ENCODE measurements at regions of chr17 and their contacts with region 1.

Region 1: GRCh38 chr17:57243171-57243948 is 13.0 kb upstream of the MSI2 start:
- DNase-seq: peak; percentile 38 to 73 (median 60)
- ATAC-seq: peak; percentile 58 to 85 (median 74)
- H3K4me3 ChIP-seq: no peak overlapping the region
- H3K27ac ChIP-seq: peak overlapping the region in 6 of 12 donors; percentile 16 to 67 (median 41)
- H3K4me1 ChIP-seq: peaks cover 0 to 17% (median 12%) of the 10 kb centered on the region in 12 donors
- H3K27me3 ChIP-seq: peaks cover 0 to 4% (median 0%) of the 10 kb centered on the region in 9 donors
- CTCF ChIP-seq: peak; percentile 95 to 99 (median 97)
- POLR2A ChIP-seq: no peak

Region 2: GRCh38 chr17:57130761-57131461 is 112.4 kb before region 1 on chr17:
- intact Hi-C with region 1: loop called in 1 of 10 experiments (anchors 10 kb)
- DNase-seq: peak; percentile 79 to 87 (median 83)
- ATAC-seq: peak; percentile 89 to 93 (median 92)
- H3K4me3 ChIP-seq: peak overlapping the region in 2 of 12 donors; percentile 26 to 32
- H3K27ac ChIP-seq: no peak overlapping the region
- H3K4me1 ChIP-seq: peaks cover 0 to 7% (median 0%) of the 10 kb centered on the region in 12 donors
- H3K27me3 ChIP-seq: no peaks in the 10 kb centered on the region
- CTCF ChIP-seq: peak; percentile 85 to 95 (median 90)
- POLR2A ChIP-seq: no peak

Region 3: GRCh38 chr17:57211543-57211942 is 31.8 kb before region 1 on chr17:
- intact Hi-C with region 1: no loop called
- DNase-seq: no peak
- ATAC-seq: no peak
- H3K4me3 ChIP-seq: no peak overlapping the region
- H3K27ac ChIP-seq: no peak overlapping the region
- H3K4me1 ChIP-seq: no peaks in the 10 kb centered on the region
- H3K27me3 ChIP-seq: no peaks in the 10 kb centered on the region
- CTCF ChIP-seq: no peak
- POLR2A ChIP-seq: no peak

Region 4: DNA sequence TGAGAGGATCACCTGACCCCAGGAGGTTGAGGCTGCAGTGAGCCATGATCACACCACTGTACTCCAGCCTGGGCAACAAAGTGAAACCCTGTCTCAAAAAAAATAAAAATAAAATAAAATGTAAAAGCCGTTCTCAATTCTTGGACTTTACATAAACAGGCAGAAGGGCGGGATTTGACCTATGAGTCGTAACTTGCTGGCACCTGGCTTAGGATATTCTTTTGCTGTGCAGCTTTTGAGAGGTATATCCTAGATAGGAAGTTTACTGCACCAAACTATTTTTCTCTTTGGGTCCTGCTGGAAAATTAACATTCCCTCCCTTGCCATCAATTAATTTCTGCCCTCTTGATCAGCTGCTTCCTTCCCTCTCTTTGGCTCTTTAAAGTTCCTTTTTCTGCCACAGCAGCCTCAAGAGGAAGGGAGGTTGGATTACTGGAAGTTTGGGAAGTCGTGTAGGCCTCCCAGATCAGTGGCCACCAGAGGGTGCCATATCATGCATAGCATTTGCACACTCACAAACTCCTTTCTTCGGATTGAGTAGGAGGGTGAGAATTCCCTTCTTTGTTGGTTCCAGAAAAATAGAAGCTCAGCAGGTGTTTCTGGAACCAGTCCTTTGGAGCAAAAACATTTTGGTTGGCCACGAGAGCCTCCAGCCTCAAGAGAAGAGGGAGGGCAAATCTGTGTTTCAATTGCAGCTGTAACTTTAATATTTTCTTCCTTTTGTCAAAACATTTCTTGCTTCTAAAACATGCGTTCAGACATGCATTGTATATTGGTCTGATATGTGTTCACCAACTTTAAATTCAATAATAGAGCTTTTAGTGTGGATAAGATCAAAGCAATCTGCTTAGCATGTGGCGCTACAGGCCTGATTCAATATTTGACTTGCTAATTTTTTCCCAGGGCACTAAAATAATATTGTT is 354.4 kb after region 1 on chr17:
- intact Hi-C with region 1: loop called in 3 of 10 experiments (anchors 5 to 10 kb)
- DNase-seq: peak in 4 of 5 donors; percentile 72 to 80 (median 76)
- ATAC-seq: peak in 3 of 4 donors; percentile 40 to 79 (median 76)
- H3K4me3 ChIP-seq: no peak overlapping the region
- H3K27ac ChIP-seq: peak overlapping the region in 5 of 12 donors; percentile 30 to 84 (median 49)
- H3K4me1 ChIP-seq: peaks cover 0 to 63% (median 24%) of the 10 kb centered on the region in 12 donors
- H3K27me3 ChIP-seq: no peaks in the 10 kb centered on the region
- CTCF ChIP-seq: peak; percentile 76 to 92 (median 85)
- POLR2A ChIP-seq: no peak

Region 5: GRCh38 chr17:57671667-57672632 is 428.6 kb after region 1 on chr17:
- intact Hi-C with region 1: loop called (anchors 2 to 10 kb)
- DNase-seq: peak; percentile 80 to 87 (median 82)
- ATAC-seq: peak; percentile 78 to 91 (median 88)
- H3K4me3 ChIP-seq: no peak overlapping the region
- H3K27ac ChIP-seq: peak overlapping the region in 2 of 12 donors; percentile 8 to 35
- H3K4me1 ChIP-seq: peaks cover 0 to 28% (median 10%) of the 10 kb centered on the region in 12 donors
- H3K27me3 ChIP-seq: no peaks in the 10 kb centered on the region
- CTCF ChIP-seq: peak; percentile 87 to 97 (median 96)
- POLR2A ChIP-seq: no peak

Region 6: DNA sequence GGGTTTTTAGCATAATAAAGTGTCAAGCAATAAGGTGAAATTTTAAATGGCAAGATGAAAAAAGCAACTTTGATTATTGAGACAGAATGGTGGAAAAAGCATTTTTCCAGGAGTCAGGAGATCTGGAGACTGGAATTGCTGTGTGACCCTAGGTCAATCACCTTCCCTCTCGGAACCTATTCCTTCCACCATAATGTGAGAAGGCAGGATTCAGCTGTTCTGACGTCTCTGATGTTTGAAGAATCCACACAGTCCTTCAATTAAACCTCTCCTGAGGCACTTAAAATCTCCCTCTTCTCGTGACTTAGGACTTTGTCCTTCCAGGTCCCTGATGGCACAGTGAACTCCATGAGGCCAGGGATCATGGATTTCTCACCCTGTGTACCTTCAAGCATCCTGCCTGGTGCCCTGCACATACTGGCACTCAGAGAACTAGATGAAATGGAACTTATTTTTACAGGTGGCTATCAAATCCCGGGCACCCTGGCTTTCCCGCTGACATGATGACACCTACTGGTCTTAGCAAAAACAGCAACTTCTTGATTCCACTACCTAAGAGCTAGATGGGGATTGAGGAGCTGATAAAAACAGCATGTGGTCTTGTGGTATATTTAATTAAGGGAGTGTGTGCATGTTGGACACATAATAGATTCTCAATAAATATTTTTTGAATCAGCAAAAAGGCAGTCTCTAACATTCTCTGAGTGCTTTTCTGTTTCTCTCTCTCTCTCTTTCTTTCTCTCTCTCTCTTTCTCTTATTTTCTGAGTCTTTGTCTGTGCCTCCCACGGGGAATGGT is 504.1 kb after region 1 on chr17:
- intact Hi-C with region 1: loop called in 7 of 10 experiments (anchors 2 to 10 kb)
- DNase-seq: no peak
- ATAC-seq: peak; percentile 37 to 62 (median 44)
- H3K4me3 ChIP-seq: no peak overlapping the region
- H3K27ac ChIP-seq: no peak overlapping the region
- H3K4me1 ChIP-seq: peaks cover 0 to 7% (median 0%) of the 10 kb centered on the region in 12 donors
- H3K27me3 ChIP-seq: peaks cover 0 to 3% (median 0%) of the 10 kb centered on the region in 9 donors
- CTCF ChIP-seq: peak; percentile 51 to 83 (median 74)
- POLR2A ChIP-seq: no peak

Measured in heart left ventricle (tissue), 16 donors.